CD4-positive, alpha-beta T cell (primary cell): ENCODE measurements at regions of chr19 and their contacts with region 1.

Region 1: DNA sequence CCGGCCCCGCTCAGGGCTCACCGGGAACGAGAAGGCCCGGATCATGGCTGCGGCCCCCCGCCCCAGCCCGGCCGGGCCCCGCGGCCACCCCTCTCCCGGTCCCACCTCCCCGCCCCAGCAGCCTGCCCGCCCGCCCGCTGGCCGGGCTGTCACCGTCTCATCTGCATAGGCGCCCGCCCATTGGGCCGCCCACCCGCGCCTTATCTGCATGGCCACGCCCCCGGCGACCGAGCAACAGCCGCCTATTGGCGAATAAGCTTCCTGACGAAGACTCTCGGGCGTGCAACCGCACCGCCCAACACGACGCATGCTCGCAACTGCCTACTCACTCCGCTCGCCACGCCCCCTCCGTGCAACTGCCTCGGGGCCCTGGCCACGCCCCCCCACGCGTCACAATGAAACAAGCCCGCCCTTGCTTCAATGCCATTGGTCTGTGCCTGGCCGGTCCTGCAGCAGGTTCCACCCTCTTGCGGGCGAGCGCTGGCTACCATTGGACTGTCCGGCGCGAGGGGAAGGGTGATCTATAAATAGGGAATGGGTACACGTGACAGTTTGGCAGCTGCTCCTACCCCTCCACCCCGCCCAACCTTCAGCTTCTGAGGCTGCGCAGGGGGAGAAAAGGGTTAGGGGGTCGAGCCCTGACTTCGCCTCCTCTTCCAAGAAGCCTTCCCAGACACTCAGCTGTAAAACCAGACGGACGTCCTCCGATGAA is at the start of gene DACT3:
- DNase-seq: peak; percentile 99 to 100 (median 100)
- ATAC-seq: peak; percentile 86
- H3K4me3 ChIP-seq: peak within 1 kb of the TSS; percentile 61
- H3K4me3 Mint-ChIP-seq: peak within 1 kb of the TSS; percentile 85
- H3K27ac ChIP-seq: peak within 1 kb of the TSS; percentile 38 to 44
- H3K27ac Mint-ChIP-seq: peak within 1 kb of the TSS; percentile 88
- H3K4me1 ChIP-seq: peaks cover 32% of the 10 kb centered on the region
- H3K4me1 Mint-ChIP-seq: peaks cover 20% of the 10 kb centered on the region
- H3K27me3 ChIP-seq: peaks cover 24 to 26% of the 10 kb centered on the region in 2 experiments
- H3K27me3 Mint-ChIP-seq: peaks cover 24% of the 10 kb centered on the region
- CTCF ChIP-seq: no peak
- total RNA-seq, gene DACT3: 0.11 TPM

Region 2: DNA sequence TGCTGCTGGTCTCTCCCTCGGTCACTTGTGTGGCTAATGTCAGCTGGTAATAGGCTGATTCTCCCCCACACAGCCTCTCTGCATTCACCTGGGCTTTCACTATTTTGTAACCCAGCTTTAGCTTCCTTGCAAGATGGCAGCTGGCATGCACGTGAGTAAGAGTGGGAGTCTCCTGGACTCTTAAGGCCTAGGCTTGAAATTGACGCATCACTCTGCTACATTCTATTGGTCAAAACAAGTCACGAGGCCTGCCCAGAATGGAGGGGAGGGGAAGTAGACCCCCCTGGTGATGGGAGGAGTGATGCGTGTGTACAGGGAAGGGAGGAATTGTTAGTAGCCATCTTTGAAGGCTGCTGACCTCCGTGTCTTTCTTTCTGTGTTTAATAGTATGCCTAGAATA is 140.6 kb before region 1 on chr19:
- CTCF ChIA-PET with region 1: interaction called, 11 read pairs
- POLR2A ChIA-PET with region 1: interaction called, 8 read pairs
- intact Hi-C with region 1: no loop called
- DNase-seq: no peak
- ATAC-seq: no peak
- H3K4me3 ChIP-seq: no peak overlapping the region
- H3K4me3 Mint-ChIP-seq: no peak overlapping the region
- H3K27ac ChIP-seq: no peak overlapping the region
- H3K27ac Mint-ChIP-seq: peak overlapping the region; percentile 90
- H3K4me1 ChIP-seq: peaks cover 58% of the 10 kb centered on the region
- H3K4me1 Mint-ChIP-seq: peaks cover 68% of the 10 kb centered on the region
- H3K27me3 ChIP-seq: no peaks in the 10 kb centered on the region
- H3K27me3 Mint-ChIP-seq: no peaks in the 10 kb centered on the region
- CTCF ChIP-seq: no peak

Region 3: DNA sequence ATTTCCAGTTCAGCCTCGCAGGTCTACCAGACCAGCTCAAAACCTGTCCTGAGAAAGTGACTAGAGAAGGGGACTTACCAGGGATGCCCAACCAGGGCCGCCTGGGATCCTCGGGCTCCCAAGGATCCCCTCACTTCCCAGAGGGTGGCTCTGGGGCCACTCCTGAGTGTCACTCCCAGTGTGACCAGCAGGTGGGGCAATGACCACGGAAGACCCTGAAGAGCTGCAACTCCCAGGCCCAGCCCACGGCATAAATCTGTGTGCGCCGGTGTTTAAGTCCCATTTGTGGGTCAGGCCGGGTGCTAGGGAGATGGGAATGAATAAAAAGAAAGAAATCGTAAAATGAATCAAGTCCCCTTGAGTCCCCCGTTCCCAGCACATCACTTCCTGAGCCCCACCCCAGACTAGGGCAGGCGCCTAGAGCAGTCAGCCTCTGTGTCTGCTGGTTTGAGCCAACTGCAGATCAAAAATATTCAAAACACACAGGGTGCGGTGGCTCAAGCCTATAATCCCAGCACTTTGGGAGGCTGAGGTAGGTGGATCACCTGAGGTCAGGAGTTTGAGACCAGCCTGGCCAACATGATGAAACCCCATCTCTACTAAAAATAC is 47.0 kb before region 1 on chr19:
- CTCF ChIA-PET with region 1: interaction called, 34 read pairs
- POLR2A ChIA-PET with region 1: interaction called, 36 read pairs
- intact Hi-C with region 1: loop called (anchors 1 kb)
- DNase-seq: peak; percentile 71 to 89 (median 77)
- ATAC-seq: peak; percentile 58
- H3K4me3 ChIP-seq: no peak overlapping the region
- H3K4me3 Mint-ChIP-seq: peak overlapping the region; percentile 56
- H3K27ac ChIP-seq: peak overlapping the region in 1 of 2 donors; percentile 41
- H3K27ac Mint-ChIP-seq: peak overlapping the region; percentile 93
- H3K4me1 ChIP-seq: peaks cover 90% of the 10 kb centered on the region
- H3K4me1 Mint-ChIP-seq: peaks cover 74% of the 10 kb centered on the region
- H3K27me3 ChIP-seq: no peaks in the 10 kb centered on the region
- H3K27me3 Mint-ChIP-seq: no peaks in the 10 kb centered on the region
- CTCF ChIP-seq: peak; percentile 90

Region 4: DNA sequence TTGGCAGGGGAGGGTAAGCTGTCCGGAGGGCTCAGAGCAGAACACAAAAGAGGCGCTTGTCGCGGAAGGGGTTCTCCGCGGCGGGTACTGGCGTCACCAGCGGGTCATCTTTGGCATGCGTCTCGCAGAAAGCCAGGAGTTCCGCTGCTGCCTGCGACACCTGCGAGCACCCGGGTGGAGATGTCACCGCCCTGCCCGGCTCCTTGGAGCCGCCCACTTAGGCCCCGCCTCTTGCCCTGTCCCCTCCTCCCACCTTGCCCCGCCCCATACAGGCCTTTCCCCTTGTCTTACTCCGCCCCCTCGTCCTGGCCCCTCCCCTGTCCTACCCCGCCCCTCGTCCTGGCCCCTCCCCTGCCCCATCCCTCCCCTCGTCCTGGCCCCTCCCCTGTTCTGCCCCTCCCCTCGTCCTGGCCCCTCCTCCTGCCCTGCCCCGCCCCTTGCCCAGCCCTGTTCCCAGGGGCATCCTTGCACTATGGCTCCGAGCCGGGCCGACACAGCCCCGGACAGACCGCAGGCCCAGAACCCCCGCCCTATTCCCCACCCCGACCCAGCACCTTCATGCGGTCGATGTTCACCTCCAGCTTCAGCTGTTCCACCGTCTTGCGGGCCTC is 27.0 kb before region 1 on chr19:
- CTCF ChIA-PET with region 1: interaction called, 10 read pairs
- POLR2A ChIA-PET with region 1: interaction called, 15 read pairs
- intact Hi-C with region 1: loop called in 1 of 2 experiments (anchors 1 kb)
- DNase-seq: peak; percentile 93 to 98 (median 97)
- ATAC-seq: peak; percentile 79
- H3K4me3 ChIP-seq: peak overlapping the region; percentile 57
- H3K4me3 Mint-ChIP-seq: peak overlapping the region; percentile 80
- H3K27ac ChIP-seq: peak overlapping the region; percentile 68 to 75
- H3K27ac Mint-ChIP-seq: peak overlapping the region; percentile 83
- H3K4me1 ChIP-seq: peaks cover 52% of the 10 kb centered on the region
- H3K4me1 Mint-ChIP-seq: peaks cover 19% of the 10 kb centered on the region
- H3K27me3 ChIP-seq: no peaks in the 10 kb centered on the region
- H3K27me3 Mint-ChIP-seq: no peaks in the 10 kb centered on the region
- CTCF ChIP-seq: no peak

Region 5: GRCh38 chr19:46746281-46747013 is 85.3 kb after region 1 on chr19 and contains the start of gene STRN4:
- CTCF ChIA-PET with region 1: no interaction called
- POLR2A ChIA-PET with region 1: no interaction called
- intact Hi-C with region 1: no loop called
- DNase-seq: peak; percentile 30 to 87 (median 54)
- ATAC-seq: peak; percentile 69
- H3K4me3 ChIP-seq: peak within 1 kb of the TSS; percentile 78
- H3K4me3 Mint-ChIP-seq: peak within 1 kb of the TSS; percentile 94
- H3K27ac ChIP-seq: peak within 1 kb of the TSS; percentile 9 to 29
- H3K27ac Mint-ChIP-seq: peak within 1 kb of the TSS; percentile 87
- H3K4me1 ChIP-seq: peaks cover 42% of the 10 kb centered on the region
- H3K4me1 Mint-ChIP-seq: peaks cover 55% of the 10 kb centered on the region
- H3K27me3 ChIP-seq: no peaks in the 10 kb centered on the region
- H3K27me3 Mint-ChIP-seq: no peaks in the 10 kb centered on the region
- CTCF ChIP-seq: no peak
- total RNA-seq, gene STRN4: 90.0 to 94.0 TPM